ENCODE measurements at regions of chr15 and their contacts with region 1.

Region 1: DNA sequence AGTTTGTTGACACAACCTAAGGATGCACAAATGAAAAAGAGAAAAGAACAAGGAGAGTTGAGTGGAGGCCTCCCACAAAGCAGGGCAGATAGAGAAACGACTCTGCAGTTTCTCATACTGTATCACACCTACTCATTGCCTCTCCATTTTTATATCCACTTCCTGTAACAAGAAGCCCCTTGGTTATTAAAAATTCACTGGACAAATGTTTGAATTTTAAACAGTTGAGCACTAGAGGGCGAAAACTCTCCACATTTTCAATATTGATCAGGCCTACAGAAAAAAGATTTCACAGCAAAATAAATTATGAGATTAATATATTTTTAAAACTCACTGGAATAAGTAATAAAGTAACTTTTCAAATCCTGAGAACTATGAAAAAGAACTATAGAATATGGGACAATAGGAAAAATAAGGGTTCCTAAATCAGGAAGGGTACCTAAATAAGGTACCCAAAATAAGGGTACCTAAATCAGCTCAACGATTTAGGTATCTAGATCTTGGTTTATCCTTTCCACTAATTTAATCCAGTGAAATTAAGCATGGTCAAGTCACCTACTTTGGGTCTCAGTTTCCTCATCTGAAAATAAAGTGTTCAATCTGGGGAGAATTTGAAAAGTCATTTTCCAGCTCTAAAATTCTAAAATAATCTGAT is 47.0 kb upstream of the PPIB start:
- DNase-seq: peak in 1 of 2 experiments; percentile 6
- H3K4me3 ChIP-seq: no peak overlapping the region
- H3K4me3 Mint-ChIP-seq: no peak overlapping the region
- H3K27ac Mint-ChIP-seq: no peak overlapping the region
- H3K4me1 ChIP-seq: no peaks in the 10 kb centered on the region
- H3K4me1 Mint-ChIP-seq: no peaks in the 10 kb centered on the region
- H3K27me3 ChIP-seq: no peaks in the 10 kb centered on the region
- H3K27me3 Mint-ChIP-seq: no peaks in the 10 kb centered on the region
- CTCF ChIP-seq: peak; percentile 34 to 35

Region 2: DNA sequence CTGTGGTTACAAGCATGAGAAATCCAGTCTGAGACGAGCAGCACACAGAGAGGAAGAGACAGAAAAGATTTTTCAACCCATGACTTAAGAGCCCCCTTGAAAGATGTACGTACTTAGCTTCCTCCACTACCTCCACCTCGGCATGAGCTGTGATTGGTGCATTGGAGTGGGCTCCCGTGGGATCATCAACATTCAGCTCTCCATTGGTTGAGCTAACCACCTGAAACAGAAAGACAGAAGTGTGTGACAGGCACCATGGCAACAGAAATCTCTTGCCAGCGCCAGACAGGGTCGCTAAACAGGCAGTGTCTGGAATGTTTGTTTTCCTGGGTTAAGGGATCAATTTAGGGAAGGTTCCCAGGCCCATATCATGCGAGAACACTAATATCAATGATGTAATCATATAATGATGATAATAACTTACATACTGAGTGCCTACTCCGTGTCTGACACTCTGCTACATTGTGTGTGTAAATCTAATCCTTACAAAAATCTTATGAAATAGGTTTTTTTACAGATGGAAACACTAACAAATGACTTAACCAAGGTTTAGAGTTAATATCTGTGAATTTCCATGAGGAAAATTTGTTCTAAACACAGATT is 29.5 kb before region 1 on chr15:
- CTCF ChIA-PET with region 1: no interaction called
- POLR2A ChIA-PET with region 1: no interaction called
- intact Hi-C with region 1: no loop called
- DNase-seq: no peak
- H3K4me3 ChIP-seq: no peak overlapping the region
- H3K4me3 Mint-ChIP-seq: no peak overlapping the region
- H3K27ac Mint-ChIP-seq: no peak overlapping the region
- H3K4me1 ChIP-seq: no peaks in the 10 kb centered on the region
- H3K4me1 Mint-ChIP-seq: no peaks in the 10 kb centered on the region
- H3K27me3 ChIP-seq: no peaks in the 10 kb centered on the region
- H3K27me3 Mint-ChIP-seq: no peaks in the 10 kb centered on the region
- CTCF ChIP-seq: no peak

Region 3: GRCh38 chr15:64191971-64192830 is 17.6 kb before region 1 on chr15:
- CTCF ChIA-PET with region 1: no interaction called
- POLR2A ChIA-PET with region 1: no interaction called
- intact Hi-C with region 1: no loop called
- DNase-seq: no peak
- H3K4me3 ChIP-seq: no peak overlapping the region
- H3K4me3 Mint-ChIP-seq: no peak overlapping the region
- H3K27ac Mint-ChIP-seq: no peak overlapping the region
- H3K4me1 ChIP-seq: no peaks in the 10 kb centered on the region
- H3K4me1 Mint-ChIP-seq: no peaks in the 10 kb centered on the region
- H3K27me3 ChIP-seq: no peaks in the 10 kb centered on the region
- H3K27me3 Mint-ChIP-seq: no peaks in the 10 kb centered on the region
- CTCF ChIP-seq: no peak

Region 4: GRCh38 chr15:64355944-64356709 is 146.3 kb after region 1 on chr15 and contains the start of gene CSNK1G1:
- CTCF ChIA-PET with region 1: interaction called, 3 read pairs
- POLR2A ChIA-PET with region 1: no interaction called
- intact Hi-C with region 1: loop called (anchors 1 kb)
- DNase-seq: peak; percentile 95 to 96
- H3K4me3 ChIP-seq: peak within 1 kb of the TSS; percentile 92
- H3K4me3 Mint-ChIP-seq: peak within 1 kb of the TSS; percentile 82
- H3K27ac Mint-ChIP-seq: peak within 1 kb of the TSS; percentile 87
- H3K4me1 ChIP-seq: 0 out of 2 replicates have a peak, but pooled peaks cover 5% of the 10 kb centered on the region
- H3K4me1 Mint-ChIP-seq: peaks cover 16% of the 10 kb centered on the region
- H3K27me3 ChIP-seq: no peaks in the 10 kb centered on the region
- H3K27me3 Mint-ChIP-seq: no peaks in the 10 kb centered on the region
- CTCF ChIP-seq: peak in 1 of 2 experiments; percentile 28
- total RNA-seq, gene CSNK1G1: 11.5 and 17.5 TPM in 2 replicates

Region 5: GRCh38 chr15:64381000-64381752 is 171.4 kb after region 1 on chr15 and contains the start of gene PCLAF:
- CTCF ChIA-PET with region 1: no interaction called
- POLR2A ChIA-PET with region 1: no interaction called
- intact Hi-C with region 1: loop called (anchors 1 kb)
- DNase-seq: peak; percentile 96 to 97
- H3K4me3 ChIP-seq: peak within 1 kb of the TSS; percentile 50
- H3K4me3 Mint-ChIP-seq: peak within 1 kb of the TSS; percentile 90
- H3K27ac Mint-ChIP-seq: peak within 1 kb of the TSS; percentile 95
- H3K4me1 ChIP-seq: no peaks in the 10 kb centered on the region; the same call in none of the 2 replicates
- H3K4me1 Mint-ChIP-seq: peaks cover 6% of the 10 kb centered on the region
- H3K27me3 ChIP-seq: no peaks in the 10 kb centered on the region
- H3K27me3 Mint-ChIP-seq: no peaks in the 10 kb centered on the region
- CTCF ChIP-seq: peak in 1 of 2 experiments; percentile 5
- total RNA-seq, gene PCLAF: 93.7 and 96.9 TPM in 2 replicates

Region 6: GRCh38 chr15:64681424-64682024 is 471.7 kb after region 1 on chr15:
- CTCF ChIA-PET with region 1: interaction called, 5 read pairs
- POLR2A ChIA-PET with region 1: no interaction called
- intact Hi-C with region 1: loop called (anchors 5 kb)
- DNase-seq: peak; percentile 69 to 75
- H3K4me3 ChIP-seq: no peak overlapping the region
- H3K4me3 Mint-ChIP-seq: no peak overlapping the region
- H3K27ac Mint-ChIP-seq: no peak overlapping the region
- H3K4me1 ChIP-seq: no peaks in the 10 kb centered on the region
- H3K4me1 Mint-ChIP-seq: no peaks in the 10 kb centered on the region
- H3K27me3 ChIP-seq: no peaks in the 10 kb centered on the region
- H3K27me3 Mint-ChIP-seq: no peaks in the 10 kb centered on the region
- CTCF ChIP-seq: peak; percentile 87 to 89

Measured in Caco-2 (cell line).